HepG2 (cell line): ENCODE measurements at regions of chr12 and their contacts with region 1.

Region 1: DNA sequence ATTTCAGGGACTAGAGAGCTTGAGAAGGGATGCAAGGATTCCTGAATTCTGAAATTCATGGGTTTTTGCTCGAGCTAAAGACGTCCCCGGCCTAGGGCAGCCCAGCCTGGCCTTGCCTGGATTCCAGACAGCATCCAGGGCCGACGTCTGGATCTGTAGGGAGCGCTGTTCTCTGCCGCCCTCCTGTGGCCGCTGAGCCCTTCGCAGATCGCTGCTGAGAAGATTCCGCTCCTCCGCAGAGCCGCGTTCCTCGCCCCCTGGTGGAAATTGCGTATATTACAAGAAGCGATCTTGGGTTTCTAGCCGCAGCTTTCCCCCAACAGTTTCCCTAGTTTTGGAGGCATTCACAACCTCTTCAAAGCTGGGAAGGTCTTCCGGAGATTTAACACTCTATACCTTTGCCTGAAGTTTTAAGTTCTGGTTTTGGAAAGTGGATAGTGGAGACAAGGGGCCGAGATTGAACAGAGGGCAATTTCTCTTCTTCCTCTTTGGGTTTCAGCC is 5.1 kb downstream of the CISTR start:
- DNase-seq: peak; percentile 76
- ATAC-seq: peak; percentile 88
- H3K4me3 ChIP-seq: no peak overlapping the region
- H3K27ac ChIP-seq: no peak overlapping the region
- H3K4me1 ChIP-seq: peaks cover 13% of the 10 kb centered on the region
- H3K27me3 ChIP-seq: peaks cover 9 to 87% of the 10 kb centered on the region in 2 experiments; a peak in 4 of 5 replicates
- CTCF ChIP-seq: peak; percentile 98
- EP300 ChIP-seq: no peak
- POLR2A ChIP-seq: no peak
- RAD21 ChIP-seq: peak; percentile 95

Region 2: DNA sequence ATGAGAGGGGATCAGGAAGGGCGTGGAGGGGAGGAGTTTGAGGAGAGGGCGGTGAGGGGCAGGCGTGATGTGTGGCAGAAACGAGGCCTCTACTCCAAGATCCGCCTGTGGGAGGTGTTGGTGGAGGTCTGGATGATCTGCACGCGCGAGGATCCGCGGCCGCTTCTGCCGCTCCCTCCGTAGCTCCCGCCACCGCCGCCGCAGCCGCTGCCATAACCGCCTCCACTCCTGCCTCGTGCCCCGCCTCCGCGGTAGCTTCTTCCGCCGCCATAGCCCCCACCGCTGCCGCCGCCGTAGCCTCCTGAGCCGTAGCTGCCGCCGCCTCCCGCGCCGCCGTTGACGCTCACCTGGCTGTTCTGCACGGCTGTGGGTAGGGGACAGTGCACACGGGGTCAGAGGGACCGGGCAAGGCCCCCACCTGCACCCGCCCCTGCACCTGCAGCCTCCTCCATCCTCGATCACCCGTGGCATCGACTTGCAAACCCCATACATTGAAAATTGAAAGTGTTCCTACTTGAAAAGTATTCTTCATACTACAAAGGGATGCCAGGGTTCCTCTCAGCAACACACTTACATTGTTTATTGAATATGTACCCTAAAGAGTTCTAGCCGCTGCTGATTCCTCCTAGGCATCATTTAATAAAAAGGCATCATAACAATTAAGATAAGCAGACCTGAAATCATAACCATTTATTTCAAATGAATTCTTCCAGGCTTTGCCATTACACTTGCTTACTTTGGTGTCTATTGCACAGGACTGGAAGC is 1055.4 kb before region 1 on chr12:
- CTCF ChIA-PET with region 1: no interaction called
- POLR2A ChIA-PET with region 1: no interaction called
- in situ Hi-C with region 1: no loop called
- intact Hi-C with region 1: no loop called
- DNase-seq: no peak
- ATAC-seq: no peak
- H3K4me3 ChIP-seq: no peak overlapping the region
- H3K27ac ChIP-seq: no peak overlapping the region
- H3K4me1 ChIP-seq: no peaks in the 10 kb centered on the region
- H3K27me3 ChIP-seq: peaks cover 6 to 53% of the 10 kb centered on the region in 2 experiments; a peak in 3 of 5 replicates
- CTCF ChIP-seq: no peak
- EP300 ChIP-seq: no peak
- POLR2A ChIP-seq: no peak
- RAD21 ChIP-seq: no peak

Region 3: DNA sequence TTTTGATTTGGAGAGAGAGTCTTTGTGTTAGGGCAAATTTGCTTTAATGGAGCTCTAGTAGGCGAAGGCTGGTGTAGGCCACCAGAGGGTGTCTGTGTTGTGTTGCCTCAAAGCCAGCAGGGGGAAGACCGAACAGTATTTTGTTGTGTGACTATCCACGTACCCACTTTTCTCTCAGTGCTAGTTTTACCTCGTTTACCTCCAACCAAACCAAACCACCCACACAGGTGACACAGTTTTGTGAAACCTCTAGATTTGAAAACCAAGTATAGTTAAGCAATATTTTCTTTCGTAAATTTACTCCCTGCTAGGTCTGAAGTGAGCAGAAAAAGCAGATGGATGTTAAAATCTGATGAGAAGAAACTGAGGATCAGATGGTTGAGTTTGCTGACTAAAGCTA is 203.1 kb before region 1 on chr12:
- CTCF ChIA-PET with region 1: interaction called, 6 read pairs
- POLR2A ChIA-PET with region 1: no interaction called
- in situ Hi-C with region 1: no loop called
- intact Hi-C with region 1: loop called (anchors 2 kb)
- DNase-seq: peak; percentile 68
- ATAC-seq: peak; percentile 90
- H3K4me3 ChIP-seq: no peak overlapping the region
- H3K27ac ChIP-seq: no peak overlapping the region
- H3K4me1 ChIP-seq: peaks cover 35% of the 10 kb centered on the region
- H3K27me3 ChIP-seq: no peaks in the 10 kb centered on the region
- CTCF ChIP-seq: peak; percentile 69
- EP300 ChIP-seq: no peak
- POLR2A ChIP-seq: no peak
- RAD21 ChIP-seq: peak; percentile 75

Region 4: DNA sequence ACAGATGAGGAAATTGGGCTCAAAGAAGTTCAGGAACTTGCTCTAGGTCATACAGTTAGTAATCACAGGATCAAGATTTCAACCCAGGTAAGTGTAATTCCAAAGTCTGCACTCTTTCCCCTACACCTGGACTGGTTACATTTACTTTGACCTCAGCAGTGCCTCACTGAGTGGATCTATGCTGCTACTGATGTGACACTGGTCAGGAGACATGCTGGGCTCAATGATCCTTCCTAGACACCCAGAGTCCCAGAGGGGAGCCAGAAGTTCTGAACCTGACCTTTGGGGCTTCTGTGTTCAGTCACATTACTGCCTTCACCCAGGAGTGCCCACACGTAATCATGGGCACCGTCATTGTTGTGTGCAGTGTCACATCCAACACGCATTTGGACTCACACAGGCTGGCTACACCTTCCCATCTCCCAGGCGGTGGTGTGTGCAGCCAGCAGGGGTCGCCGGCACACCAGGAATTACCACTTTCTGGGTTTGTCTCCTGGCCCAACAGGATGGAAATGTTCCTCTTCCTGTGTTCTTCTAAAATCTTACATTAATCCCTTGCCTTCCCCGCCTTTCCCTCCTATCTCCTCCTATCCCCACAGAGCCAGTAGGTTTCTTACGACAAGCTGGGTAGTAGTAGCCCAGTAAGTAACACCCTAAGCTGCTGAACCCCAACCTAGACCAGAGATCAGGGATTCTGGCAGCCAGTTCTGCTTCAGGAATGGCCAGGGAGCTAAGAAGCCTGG is 45.0 kb before region 1 on chr12:
- CTCF ChIA-PET with region 1: interaction called, 216 read pairs
- POLR2A ChIA-PET with region 1: interaction called, 3 read pairs
- in situ Hi-C with region 1: loop called (anchors 5 kb)
- intact Hi-C with region 1: loop called (anchors 1 kb)
- DNase-seq: peak; percentile 43
- ATAC-seq: peak; percentile 97
- H3K4me3 ChIP-seq: no peak overlapping the region
- H3K27ac ChIP-seq: no peak overlapping the region
- H3K4me1 ChIP-seq: peaks cover 2% of the 10 kb centered on the region; the same call in 1 of the 2 replicates
- H3K27me3 ChIP-seq: peaks cover 7 to 45% of the 10 kb centered on the region in 2 experiments
- CTCF ChIP-seq: peak; percentile 97
- EP300 ChIP-seq: no peak
- POLR2A ChIP-seq: no peak
- RAD21 ChIP-seq: peak; percentile 91

Region 5: DNA sequence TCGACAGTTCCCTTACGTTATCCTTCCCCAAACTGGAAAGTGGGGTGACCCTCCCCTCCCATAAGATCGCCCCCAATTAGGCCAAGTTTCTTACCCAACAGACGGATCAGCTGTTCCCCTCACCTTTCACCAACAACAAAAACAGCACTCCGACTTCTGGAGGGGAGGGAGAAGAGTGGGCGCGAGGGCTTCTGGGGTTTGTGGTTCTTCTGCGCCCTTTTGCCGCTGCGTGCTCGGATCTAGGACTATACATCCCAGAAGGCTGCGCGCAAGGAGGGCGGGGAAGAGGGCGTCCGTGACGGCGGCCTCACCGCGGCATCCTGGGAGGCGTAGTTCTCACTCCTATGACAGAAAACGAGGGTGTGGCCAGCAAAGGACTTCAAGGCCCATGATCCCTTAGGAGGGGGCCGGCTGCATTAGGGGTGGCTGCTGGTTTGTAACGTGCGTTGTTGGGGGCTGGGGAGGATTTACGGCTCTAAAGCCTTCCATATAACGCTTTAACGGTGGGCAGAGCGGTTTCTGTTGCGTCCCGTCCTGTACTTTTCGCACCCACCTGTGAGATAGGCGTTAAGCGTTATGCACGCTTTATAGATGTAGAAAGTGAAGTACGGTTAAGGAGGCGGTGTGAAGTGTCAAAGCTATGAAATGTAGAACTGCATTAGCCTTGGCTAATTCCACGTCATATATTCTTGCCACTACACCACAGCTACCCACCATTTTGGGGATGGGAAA is 19.2 kb before region 1 on chr12 and contains the start of gene CALCOCO1:
- CTCF ChIA-PET with region 1: interaction called, 3 read pairs
- POLR2A ChIA-PET with region 1: no interaction called
- in situ Hi-C with region 1: no loop called
- intact Hi-C with region 1: loop called (anchors 2 kb)
- DNase-seq: peak; percentile 95
- ATAC-seq: peak; percentile 99
- H3K4me3 ChIP-seq: peak within 1 kb of the TSS; percentile 72 to 81 (median 76)
- H3K27ac ChIP-seq: peak within 1 kb of the TSS; percentile 10
- H3K4me1 ChIP-seq: peaks cover 16% of the 10 kb centered on the region
- H3K27me3 ChIP-seq: no peaks in the 10 kb centered on the region; a peak in 1 of 5 replicates
- CTCF ChIP-seq: no peak
- EP300 ChIP-seq: no peak
- POLR2A ChIP-seq: peak in 1 of 2 experiments; percentile 80; a peak in 2 of 4 replicates
- RAD21 ChIP-seq: no peak
- total RNA-seq, gene CALCOCO1: 4.9 and 7.7 TPM in 2 replicates